ENCODE measurements at regions of chr16 and their contacts with region 1.

Region 1: DNA sequence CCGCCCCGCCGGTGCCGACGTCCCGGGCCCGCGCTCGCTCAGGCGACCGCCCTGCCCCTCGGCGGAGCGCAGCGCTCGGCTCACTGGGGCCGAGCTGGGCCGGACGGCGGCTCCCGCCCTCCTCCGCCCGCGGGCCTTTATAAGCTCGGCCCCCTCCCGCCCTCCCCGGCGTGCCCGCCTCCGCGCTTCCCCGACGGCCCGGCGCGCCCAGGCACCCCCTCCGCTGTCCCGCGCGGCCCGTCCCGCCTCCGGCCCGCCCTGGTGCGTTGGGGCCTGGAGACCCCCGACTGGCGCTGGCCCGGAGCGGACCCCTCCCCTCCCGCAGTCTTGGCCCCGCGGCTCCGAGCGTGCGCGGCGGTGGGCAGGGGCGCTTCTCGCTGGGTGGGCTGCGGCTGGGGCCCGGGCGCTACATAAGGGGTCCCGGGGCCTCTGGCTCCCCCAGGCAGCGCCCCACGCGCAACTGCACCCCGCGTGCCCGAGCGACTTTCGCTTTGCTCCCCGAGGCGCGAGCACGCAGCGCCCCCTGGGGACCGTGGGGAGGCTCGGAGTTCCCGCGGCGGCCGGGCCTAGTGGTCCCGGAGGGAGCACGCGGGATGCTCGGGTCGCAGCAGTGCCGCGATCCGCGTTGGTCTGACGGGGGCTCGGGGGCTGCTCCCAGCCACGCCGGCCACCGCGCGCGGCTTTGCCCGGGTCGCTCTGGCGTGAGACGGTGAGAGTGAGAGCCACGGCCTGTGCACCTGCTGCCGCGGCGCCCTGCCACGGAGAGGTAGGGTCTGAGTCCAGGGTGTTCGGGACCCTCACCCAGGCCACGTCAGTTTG is at the start of gene PIEZO1:
- DNase-seq: no peak
- H3K4me3 ChIP-seq: peak within 1 kb of the TSS; percentile 66 to 90 (median 88)
- H3K27ac ChIP-seq: peak within 1 kb of the TSS; percentile 93 to 98 (median 94)
- H3K4me1 ChIP-seq: peaks cover 36 to 51% (median 41%) of the 10 kb centered on the region in 3 donors
- H3K27me3 ChIP-seq: peaks cover 0 to 9% (median 0%) of the 10 kb centered on the region in 4 donors
- CTCF ChIP-seq: peak; percentile 87 to 96 (median 93)
- POLR2A ChIP-seq: peak in 2 of 4 donors; percentile 75 to 86
- total RNA-seq, gene PIEZO1: 46.0 to 131 (median 103) TPM

Region 2: GRCh38 chr16:88737298-88738150 is 47.8 kb before region 1 on chr16:
- intact Hi-C with region 1: loop called (anchors 2 kb)
- DNase-seq: no peak
- H3K4me3 ChIP-seq: no peak overlapping the region
- H3K27ac ChIP-seq: peak overlapping the region in 1 of 4 donors; percentile 17
- H3K4me1 ChIP-seq: peaks cover 7 to 37% (median 19%) of the 10 kb centered on the region in 3 donors
- H3K27me3 ChIP-seq: no peaks in the 10 kb centered on the region
- CTCF ChIP-seq: peak; percentile 96 to 100 (median 100)
- POLR2A ChIP-seq: no peak

Region 3: GRCh38 chr16:88901718-88902337 is 116.5 kb after region 1 on chr16:
- intact Hi-C with region 1: no loop called
- DNase-seq: no peak
- H3K4me3 ChIP-seq: no peak overlapping the region
- H3K27ac ChIP-seq: no peak overlapping the region
- H3K4me1 ChIP-seq: peaks cover 0 to 15% (median 0%) of the 10 kb centered on the region in 3 donors
- H3K27me3 ChIP-seq: peaks cover 0 to 49% (median 0%) of the 10 kb centered on the region in 4 donors
- CTCF ChIP-seq: no peak
- POLR2A ChIP-seq: no peak

Measured in esophagus squamous epithelium (tissue), 5 donors.